ENCODE measurements at regions of chr9 and their contacts with region 1.

Region 1: GRCh38 chr9:15231788-15232635 is 75.0 kb downstream of the TTC39B start:
- DNase-seq: peak; percentile 39
- CTCF ChIP-seq: peak; percentile 34

Region 2: GRCh38 chr9:15205632-15206420 is 26.2 kb before region 1 on chr9:
- CTCF ChIA-PET with region 1: interaction called, 10 read pairs
- POLR2A ChIA-PET with region 1: no interaction called
- DNase-seq: no peak
- CTCF ChIP-seq: no peak

Region 3: DNA sequence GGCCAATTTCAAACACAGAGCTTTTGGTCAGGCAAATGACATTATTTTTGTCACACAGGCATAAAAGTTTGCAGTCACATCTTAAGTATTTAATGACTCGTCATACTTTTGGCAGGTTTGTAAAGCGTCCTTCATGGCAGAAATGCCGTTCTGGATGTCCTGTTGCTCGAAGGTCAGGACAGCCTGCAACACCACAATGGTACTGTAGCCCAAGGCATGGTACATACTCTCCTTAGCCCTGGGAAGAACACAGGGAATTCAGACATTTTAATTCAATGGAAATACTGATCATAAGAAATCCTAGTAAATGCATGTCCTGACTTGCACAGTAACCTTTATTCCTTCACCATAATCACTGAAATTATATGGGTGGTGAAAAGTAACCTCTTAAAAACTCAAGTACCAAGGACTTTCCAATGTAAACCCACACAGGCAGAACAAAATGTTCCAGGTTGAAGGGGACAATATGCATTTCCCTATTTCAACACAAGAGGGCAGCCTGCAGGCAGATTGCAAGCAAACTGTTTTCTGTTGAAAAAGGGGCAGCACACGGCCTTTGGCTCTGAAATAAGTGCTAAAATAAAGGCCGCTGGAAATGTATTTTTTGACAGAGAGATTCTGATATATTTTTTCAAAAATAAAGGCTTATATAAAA is 20.7 kb before region 1 on chr9:
- CTCF ChIA-PET with region 1: interaction called, 12 read pairs
- POLR2A ChIA-PET with region 1: no interaction called
- DNase-seq: peak; percentile 53
- CTCF ChIP-seq: peak; percentile 85

Region 4: GRCh38 chr9:15220658-15221318 is 11.2 kb before region 1 on chr9:
- CTCF ChIA-PET with region 1: interaction called, 25 read pairs
- POLR2A ChIA-PET with region 1: no interaction called
- DNase-seq: no peak
- CTCF ChIP-seq: no peak

Region 5: GRCh38 chr9:15243086-15243485 is 11.1 kb after region 1 on chr9:
- CTCF ChIA-PET with region 1: no interaction called
- POLR2A ChIA-PET with region 1: no interaction called
- DNase-seq: no peak
- CTCF ChIP-seq: no peak

Region 6: DNA sequence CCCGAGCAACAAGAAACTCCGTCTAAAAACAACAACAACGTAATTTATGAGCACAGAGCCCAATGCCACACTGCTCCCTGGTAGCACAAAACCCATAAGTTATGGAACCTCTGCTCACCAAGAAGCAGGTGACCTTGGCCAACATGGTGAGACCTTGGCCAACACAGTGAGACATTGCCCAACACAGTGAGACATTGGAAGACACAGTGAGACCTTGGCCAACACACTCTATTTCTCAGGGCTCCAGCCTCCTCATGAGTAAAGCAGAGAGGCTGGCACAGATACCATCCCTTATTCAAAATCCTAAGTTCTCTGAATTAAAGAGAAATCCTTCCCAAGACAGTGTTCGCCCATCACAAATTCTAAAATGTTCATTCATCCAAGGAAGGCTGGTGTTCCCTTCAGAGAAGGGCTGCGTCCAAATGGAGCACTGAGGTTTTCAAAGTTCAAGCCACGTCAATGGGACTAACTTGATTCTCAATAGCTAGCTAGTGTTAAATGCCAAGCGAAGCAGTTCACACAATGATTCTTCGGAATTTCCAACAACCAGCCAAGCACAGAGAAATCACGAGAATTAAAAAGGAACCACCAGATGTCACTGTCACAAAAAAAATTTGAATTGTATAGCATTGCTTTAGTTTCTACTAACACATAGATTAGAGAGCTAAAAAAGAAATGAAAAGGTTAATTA is 45.5 kb after region 1 on chr9:
- CTCF ChIA-PET with region 1: no interaction called
- POLR2A ChIA-PET with region 1: no interaction called
- DNase-seq: no peak
- CTCF ChIP-seq: no peak

Region 7: GRCh38 chr9:15422372-15423230 is 190.6 kb after region 1 on chr9 and contains the start of gene SNAPC3:
- CTCF ChIA-PET with region 1: no interaction called
- POLR2A ChIA-PET with region 1: no interaction called
- DNase-seq: peak; percentile 95
- CTCF ChIP-seq: no peak

Measured in GM10248 (cell line).